Calu3 (cell line): ENCODE measurements at regions of chr9 and their contacts with region 1.

Region 1: DNA sequence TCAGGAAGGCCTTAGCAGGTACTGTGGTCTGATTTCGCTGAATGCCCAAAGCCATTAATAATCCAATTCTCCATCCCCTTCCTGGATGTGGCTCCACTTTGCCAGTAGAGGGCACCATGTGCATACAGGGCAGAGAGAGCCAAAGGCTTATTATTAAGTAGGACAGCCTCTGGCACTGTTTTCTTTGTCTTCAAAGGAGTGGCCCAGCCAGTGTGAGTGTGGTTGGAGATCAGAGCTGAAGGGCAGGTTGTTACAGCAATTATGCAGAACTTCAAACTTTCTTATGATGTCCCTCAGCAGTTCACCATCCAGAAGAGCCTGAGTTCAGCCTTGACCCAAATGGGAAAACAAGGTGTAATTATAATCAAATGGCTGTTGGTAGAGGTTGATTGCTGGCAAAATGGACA is 38.6 kb upstream of the CEMIP2 start:
- DNase-seq: peak; percentile 67
- H3K4me3 Mint-ChIP-seq: no peak overlapping the region
- H3K27ac Mint-ChIP-seq: no peak overlapping the region
- H3K4me1 Mint-ChIP-seq: peaks cover 8% of the 10 kb centered on the region
- H3K27me3 Mint-ChIP-seq: no peaks in the 10 kb centered on the region
- CTCF ChIP-seq: peak; percentile 52

Region 2: DNA sequence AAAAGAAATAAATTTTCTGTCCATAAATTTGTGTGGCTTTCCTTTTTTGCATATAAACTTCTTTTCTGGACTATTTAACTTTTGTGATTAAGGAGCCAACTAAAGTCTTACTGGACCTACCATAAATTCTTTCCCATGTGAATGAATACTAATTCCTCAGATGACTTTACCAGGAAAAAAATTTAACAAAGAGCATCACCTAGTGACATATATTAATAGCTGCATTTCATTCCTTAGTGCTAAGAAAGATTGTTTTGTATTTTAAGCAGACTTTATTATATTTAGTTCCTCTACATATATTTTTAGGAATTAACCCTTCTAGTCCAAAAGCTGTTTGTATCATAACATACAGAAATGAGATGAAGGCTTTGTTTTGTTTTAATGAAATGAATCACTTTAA is 168.9 kb after region 1 on chr9:
- CTCF ChIA-PET with region 1: interaction called, 10 read pairs
- intact Hi-C with region 1: loop called (anchors 1 kb)
- DNase-seq: no peak
- H3K4me3 Mint-ChIP-seq: no peak overlapping the region
- H3K27ac Mint-ChIP-seq: no peak overlapping the region
- H3K4me1 Mint-ChIP-seq: no peaks in the 10 kb centered on the region
- H3K27me3 Mint-ChIP-seq: no peaks in the 10 kb centered on the region
- CTCF ChIP-seq: no peak

Region 3: GRCh38 chr9:72022841-72023240 is 215.9 kb after region 1 on chr9:
- CTCF ChIA-PET with region 1: interaction called, 7 read pairs
- intact Hi-C with region 1: loop called (anchors 2 kb)
- DNase-seq: no peak
- H3K4me3 Mint-ChIP-seq: no peak overlapping the region
- H3K27ac Mint-ChIP-seq: peak overlapping the region; percentile 3
- H3K4me1 Mint-ChIP-seq: peaks cover 20% of the 10 kb centered on the region
- H3K27me3 Mint-ChIP-seq: no peaks in the 10 kb centered on the region
- CTCF ChIP-seq: no peak